Caco-2 (cell line): ENCODE measurements at regions of chr9 and their contacts with region 1.

Region 1: DNA sequence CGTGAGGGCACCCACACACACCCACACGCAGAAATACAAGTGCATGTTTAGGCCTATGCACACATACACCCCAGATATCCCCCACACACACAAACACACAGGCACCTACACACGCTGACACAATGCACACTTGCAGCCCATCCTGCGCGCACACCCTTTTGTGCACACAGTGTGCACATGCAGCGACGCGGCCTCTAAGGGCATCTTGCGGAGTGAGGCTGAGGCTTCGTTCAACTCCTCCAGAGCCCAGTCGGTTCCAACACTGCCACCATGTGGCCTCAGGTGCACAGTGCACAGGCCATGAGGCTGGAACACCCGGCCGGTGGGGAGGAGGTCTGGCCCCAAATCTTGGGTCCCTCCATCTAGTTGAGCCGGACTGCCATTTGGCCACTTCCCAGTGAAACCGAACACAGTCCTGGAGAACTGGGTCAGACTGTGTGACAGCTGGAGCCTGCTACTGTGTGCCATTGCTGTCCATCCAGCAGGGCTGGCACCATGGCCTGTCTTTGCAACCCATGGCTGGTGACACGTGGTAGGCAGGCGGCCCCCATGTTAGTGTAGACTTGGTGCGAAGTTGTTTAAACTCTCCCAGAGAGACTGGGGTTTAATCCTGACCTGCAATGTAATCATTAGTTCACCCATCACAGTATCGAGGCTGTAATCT is 97.7 kb upstream of the MVB12B start:
- DNase-seq: peak; percentile 74 to 80
- H3K4me3 ChIP-seq: no peak overlapping the region
- H3K4me3 Mint-ChIP-seq: no peak overlapping the region
- H3K27ac Mint-ChIP-seq: no peak overlapping the region
- H3K4me1 ChIP-seq: no peaks in the 10 kb centered on the region
- H3K4me1 Mint-ChIP-seq: no peaks in the 10 kb centered on the region
- H3K27me3 ChIP-seq: no peaks in the 10 kb centered on the region; the same call in 1 of the 2 replicates
- H3K27me3 Mint-ChIP-seq: peaks cover 7% of the 10 kb centered on the region
- CTCF ChIP-seq: peak; percentile 90 to 91

Region 2: DNA sequence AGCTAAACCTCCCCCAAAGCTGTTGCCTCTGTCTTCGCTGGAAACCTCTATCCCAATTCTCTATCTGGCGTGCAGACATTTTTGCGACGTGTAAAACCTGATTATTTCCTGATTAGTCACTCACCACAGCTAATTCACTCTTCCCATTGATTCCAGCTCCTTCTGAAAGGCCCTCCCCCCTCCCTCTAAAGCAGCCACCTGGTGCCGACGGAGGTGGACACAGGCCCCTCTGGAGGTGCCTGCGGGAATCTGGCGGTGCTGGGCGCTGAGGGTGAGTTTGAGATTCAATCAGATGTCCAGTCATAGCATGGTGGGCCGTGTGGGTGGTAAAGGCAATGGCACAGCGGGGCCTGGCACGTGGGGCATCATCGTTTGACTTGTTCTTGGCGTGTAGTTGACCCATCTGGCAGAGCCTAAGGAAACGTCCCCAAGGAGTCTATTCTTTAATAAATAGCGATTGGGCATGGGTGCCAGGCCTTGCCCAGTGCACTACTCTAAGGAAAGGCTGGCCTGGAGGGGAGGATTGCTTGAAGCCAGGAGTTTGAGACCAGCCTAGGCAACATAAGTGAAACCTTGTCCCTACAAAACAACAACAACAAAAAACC is 173.4 kb before region 1 on chr9:
- CTCF ChIA-PET with region 1: no interaction called
- POLR2A ChIA-PET with region 1: no interaction called
- intact Hi-C with region 1: loop called (anchors 2 kb)
- DNase-seq: no peak
- H3K4me3 ChIP-seq: no peak overlapping the region
- H3K4me3 Mint-ChIP-seq: no peak overlapping the region
- H3K27ac Mint-ChIP-seq: no peak overlapping the region
- H3K4me1 ChIP-seq: no peaks in the 10 kb centered on the region
- H3K4me1 Mint-ChIP-seq: no peaks in the 10 kb centered on the region
- H3K27me3 ChIP-seq: no peaks in the 10 kb centered on the region
- H3K27me3 Mint-ChIP-seq: peaks cover 8% of the 10 kb centered on the region
- CTCF ChIP-seq: no peak